ENCODE measurements at regions of chr9 and their contacts with region 1.

Region 1: GRCh38 chr9:126317513-126317912 is 9.1 kb upstream of the MVB12B start:
- DNase-seq: peak; percentile 38
- H3K4me3 Mint-ChIP-seq: no peak overlapping the region
- H3K27ac Mint-ChIP-seq: no peak overlapping the region
- H3K4me1 Mint-ChIP-seq: peaks cover 3% of the 10 kb centered on the region
- H3K27me3 Mint-ChIP-seq: no peaks in the 10 kb centered on the region

Region 2: GRCh38 chr9:125580701-125581286 is 736.7 kb before region 1 on chr9:
- CTCF ChIA-PET with region 1: no interaction called
- POLR2A ChIA-PET with region 1: no interaction called
- intact Hi-C with region 1: no loop called
- DNase-seq: no peak
- H3K4me3 Mint-ChIP-seq: no peak overlapping the region
- H3K27ac Mint-ChIP-seq: no peak overlapping the region
- H3K4me1 Mint-ChIP-seq: no peaks in the 10 kb centered on the region
- H3K27me3 Mint-ChIP-seq: no peaks in the 10 kb centered on the region

Region 3: DNA sequence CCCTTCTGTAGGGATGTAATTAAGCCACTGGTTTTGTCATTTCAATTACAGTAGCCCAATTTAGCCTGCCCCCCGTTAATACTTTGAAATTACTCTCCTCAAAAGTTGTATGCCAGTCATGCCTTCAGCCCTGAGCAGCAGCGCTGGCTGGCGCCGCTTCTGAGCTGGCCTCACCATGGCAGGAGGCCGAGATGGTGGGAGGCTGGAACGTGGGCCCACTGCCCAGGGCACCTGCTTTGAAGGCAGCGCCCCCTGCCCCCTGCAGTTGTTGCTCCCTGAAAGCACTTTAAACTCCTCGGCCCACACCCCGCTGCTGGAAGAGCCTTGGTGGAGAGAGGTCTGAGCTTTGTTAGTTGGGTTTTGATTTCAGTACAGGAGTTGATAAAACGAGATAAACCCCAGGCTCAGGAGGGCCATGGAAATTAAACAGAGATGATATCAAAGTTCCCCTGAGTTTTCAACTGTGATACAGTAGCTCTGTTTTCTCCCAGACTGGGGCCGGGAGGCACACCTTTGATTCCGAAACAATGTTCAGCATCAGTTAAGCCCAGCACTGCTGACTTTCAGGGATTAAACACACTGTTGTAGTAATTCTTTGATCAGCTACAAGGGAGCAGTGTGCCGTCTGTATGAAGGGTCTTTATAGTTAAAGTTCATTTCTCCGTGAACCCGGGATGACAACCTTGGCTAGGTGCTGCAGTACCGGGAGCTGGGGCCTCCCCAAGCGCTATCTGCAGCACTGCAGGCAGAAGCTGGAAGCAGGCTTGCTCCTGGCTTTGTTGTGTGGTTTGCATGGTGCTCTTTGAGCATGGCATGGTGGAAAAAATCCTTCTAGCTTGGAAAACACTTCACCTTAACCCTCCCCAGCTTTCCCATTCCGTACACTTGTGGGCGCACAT is 18.6 kb after region 1 on chr9:
- CTCF ChIA-PET with region 1: interaction called, 10 read pairs
- POLR2A ChIA-PET with region 1: no interaction called
- intact Hi-C with region 1: no loop called
- DNase-seq: no peak
- H3K4me3 Mint-ChIP-seq: no peak overlapping the region
- H3K27ac Mint-ChIP-seq: no peak overlapping the region
- H3K4me1 Mint-ChIP-seq: peaks cover 2% of the 10 kb centered on the region
- H3K27me3 Mint-ChIP-seq: no peaks in the 10 kb centered on the region

Measured in activated CD4-positive, alpha-beta memory T cell treated with anti-CD3 and anti-CD28 coated beads for 36 hours (primary cell).